ENCODE measurements at regions of chr3 and their contacts with region 1.

Region 1: DNA sequence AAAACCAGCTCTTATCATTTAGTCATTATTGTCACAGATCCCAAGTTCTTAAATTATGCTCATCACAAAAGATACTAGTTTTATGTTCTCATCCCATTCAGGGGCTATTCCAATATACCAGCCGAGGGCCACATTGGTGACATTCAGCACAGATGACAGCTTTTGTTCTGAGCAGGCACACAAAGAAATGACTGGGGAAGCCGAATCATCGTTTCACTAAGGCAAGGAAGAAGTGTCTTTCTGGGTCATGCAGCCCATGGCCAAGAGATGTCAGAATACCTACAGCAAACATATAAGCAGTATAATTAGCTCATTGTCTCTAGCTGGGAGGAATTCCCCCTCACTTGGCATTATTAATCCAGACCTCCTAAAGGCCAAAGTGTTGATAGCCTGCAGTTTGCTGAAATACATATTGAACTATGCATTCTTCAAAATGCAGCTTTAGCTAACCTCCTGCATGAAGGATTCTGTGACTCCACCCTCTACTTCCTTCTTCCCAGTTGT is 100.2 kb downstream of the CNTN4 start:
- DNase-seq: no peak
- ATAC-seq: no peak

Region 2: DNA sequence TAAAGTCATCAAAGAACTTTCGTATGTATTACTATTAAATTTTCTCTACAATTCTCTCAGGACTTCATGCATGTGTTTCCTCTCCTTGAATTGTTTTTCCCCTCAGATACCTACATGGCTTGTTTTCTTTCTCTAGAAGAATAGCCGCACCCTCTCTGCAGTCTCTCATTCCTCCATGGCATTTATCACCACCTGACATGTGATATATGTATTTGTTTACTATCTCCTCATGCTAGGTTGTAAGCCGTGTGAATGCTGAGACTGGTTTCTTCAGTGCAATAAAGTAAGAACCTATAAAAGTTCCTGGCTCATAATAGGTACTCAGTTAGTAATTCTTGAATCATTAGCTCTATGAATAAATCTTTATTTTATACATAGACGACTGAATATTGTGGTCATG is 49.0 kb after region 1 on chr3:
- intact Hi-C with region 1: loop called (anchors 2 kb)
- DNase-seq: no peak
- ATAC-seq: no peak